A673 (cell line): ENCODE measurements at regions of chr2 and their contacts with region 1.

Region 1: DNA sequence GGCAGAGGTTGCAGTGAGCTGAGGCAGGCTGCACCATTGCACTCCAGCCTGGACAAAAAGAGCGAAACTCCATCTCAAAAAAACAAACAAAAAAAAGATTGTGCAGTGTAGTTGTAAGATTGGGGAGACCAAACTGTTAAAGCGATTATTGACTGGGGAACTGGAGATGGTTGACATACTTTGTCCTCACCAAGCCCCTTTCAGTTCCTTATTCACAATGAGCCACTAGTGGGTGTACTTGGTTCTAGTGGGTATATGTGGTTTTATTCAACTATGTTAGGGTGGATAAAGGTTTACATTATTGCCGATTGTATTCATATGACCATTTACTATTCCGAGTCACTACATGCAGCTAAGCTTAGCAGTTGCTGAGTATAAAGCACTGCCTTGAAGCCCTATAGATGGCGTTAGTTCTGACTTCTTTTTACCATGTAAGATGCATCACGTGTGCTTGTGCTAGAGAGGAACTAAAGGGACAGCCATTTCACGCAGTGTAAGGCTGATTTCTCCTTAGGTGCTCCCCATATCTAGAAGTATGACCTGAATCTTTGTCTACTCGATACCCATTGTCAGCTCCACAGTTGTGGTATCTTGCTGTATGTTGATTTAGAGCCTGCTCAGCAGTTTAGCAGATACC is 12.1 kb downstream of the EIF4E2 start:
- DNase-seq: no peak
- H3K4me3 ChIP-seq: no peak overlapping the region
- H3K27ac ChIP-seq: no peak overlapping the region
- H3K4me1 ChIP-seq: no peaks in the 10 kb centered on the region
- H3K27me3 ChIP-seq: no peaks in the 10 kb centered on the region
- CTCF ChIP-seq: no peak

Region 2: GRCh38 chr2:232250246-232251175 is 312.1 kb before region 1 on chr2:
- CTCF ChIA-PET with region 1: no interaction called
- POLR2A ChIA-PET with region 1: no interaction called
- intact Hi-C with region 1: no loop called
- DNase-seq: no peak
- H3K4me3 ChIP-seq: no peak overlapping the region
- H3K27ac ChIP-seq: no peak overlapping the region
- H3K4me1 ChIP-seq: no peaks in the 10 kb centered on the region
- H3K27me3 ChIP-seq: no peaks in the 10 kb centered on the region
- CTCF ChIP-seq: no peak

Region 3: GRCh38 chr2:232276084-232276732 is 286.4 kb before region 1 on chr2:
- CTCF ChIA-PET with region 1: no interaction called
- POLR2A ChIA-PET with region 1: no interaction called
- intact Hi-C with region 1: no loop called
- DNase-seq: no peak
- H3K4me3 ChIP-seq: no peak overlapping the region
- H3K27ac ChIP-seq: no peak overlapping the region
- H3K4me1 ChIP-seq: no peaks in the 10 kb centered on the region
- H3K27me3 ChIP-seq: no peaks in the 10 kb centered on the region
- CTCF ChIP-seq: no peak

Region 4: GRCh38 chr2:232613538-232614134 is 51.0 kb after region 1 on chr2:
- CTCF ChIA-PET with region 1: interaction called, 14 read pairs
- POLR2A ChIA-PET with region 1: no interaction called
- intact Hi-C with region 1: no loop called
- DNase-seq: no peak
- H3K4me3 ChIP-seq: no peak overlapping the region
- H3K27ac ChIP-seq: no peak overlapping the region
- H3K4me1 ChIP-seq: no peaks in the 10 kb centered on the region
- H3K27me3 ChIP-seq: no peaks in the 10 kb centered on the region
- CTCF ChIP-seq: no peak

Region 5: DNA sequence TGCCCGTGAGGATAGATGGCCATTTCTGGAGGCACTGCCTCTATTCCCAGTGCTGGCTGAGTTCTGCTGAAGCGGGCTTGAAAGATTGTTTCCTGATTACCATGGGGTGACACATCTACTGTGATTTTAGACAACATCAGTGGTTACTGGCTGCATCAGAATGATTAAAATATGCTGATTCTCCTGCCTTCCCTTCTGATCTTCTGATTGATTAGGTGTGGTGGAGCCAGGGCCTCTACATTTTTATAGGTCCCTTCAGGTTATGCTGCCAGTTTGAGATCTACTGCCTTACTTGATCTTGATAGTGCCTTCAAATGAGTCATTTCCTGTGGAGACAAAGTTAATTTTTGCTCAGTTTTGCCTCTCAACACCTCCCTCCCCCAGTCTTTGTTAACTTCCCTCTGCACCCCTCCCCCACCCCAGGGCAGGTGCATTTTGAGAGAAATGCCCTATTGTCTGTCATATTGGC is 275.8 kb after region 1 on chr2:
- CTCF ChIA-PET with region 1: no interaction called
- POLR2A ChIA-PET with region 1: no interaction called
- intact Hi-C with region 1: no loop called
- DNase-seq: peak; percentile 47
- H3K4me3 ChIP-seq: no peak overlapping the region
- H3K27ac ChIP-seq: no peak overlapping the region
- H3K4me1 ChIP-seq: peaks cover 20% of the 10 kb centered on the region
- H3K27me3 ChIP-seq: no peaks in the 10 kb centered on the region
- CTCF ChIP-seq: no peak